ENCODE measurements at regions of chr4 and their contacts with region 1.

Region 1: DNA sequence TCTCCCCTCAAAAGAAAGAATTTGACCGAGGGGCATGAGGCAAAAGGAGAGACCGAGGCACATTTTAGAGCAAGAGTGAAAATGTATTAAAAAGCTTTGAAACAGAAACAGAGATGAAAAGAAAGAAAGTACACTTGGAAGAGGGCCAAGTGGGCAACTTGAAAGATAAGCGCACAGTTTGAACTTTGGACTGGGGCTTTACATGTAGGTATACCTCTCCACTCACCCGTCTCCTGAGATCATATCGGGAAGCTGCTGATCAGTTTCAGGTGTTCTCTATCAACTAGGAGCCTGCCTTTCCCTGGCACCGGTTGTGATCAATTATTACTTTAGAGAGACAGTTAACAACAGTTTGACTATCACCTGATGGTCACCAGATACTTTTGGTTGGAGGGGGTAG is 2666.5 kb downstream of the ARAP2 start:
- DNase-seq: no peak
- ATAC-seq: peak; percentile 43
- H3K4me3 ChIP-seq: no peak overlapping the region
- H3K27ac ChIP-seq: no peak overlapping the region
- H3K4me1 ChIP-seq: no peaks in the 10 kb centered on the region
- H3K27me3 ChIP-seq: no peaks in the 10 kb centered on the region
- CTCF ChIP-seq: no peak
- EP300 ChIP-seq: no peak
- POLR2A ChIP-seq: no peak
- RAD21 ChIP-seq: no peak

Region 2: DNA sequence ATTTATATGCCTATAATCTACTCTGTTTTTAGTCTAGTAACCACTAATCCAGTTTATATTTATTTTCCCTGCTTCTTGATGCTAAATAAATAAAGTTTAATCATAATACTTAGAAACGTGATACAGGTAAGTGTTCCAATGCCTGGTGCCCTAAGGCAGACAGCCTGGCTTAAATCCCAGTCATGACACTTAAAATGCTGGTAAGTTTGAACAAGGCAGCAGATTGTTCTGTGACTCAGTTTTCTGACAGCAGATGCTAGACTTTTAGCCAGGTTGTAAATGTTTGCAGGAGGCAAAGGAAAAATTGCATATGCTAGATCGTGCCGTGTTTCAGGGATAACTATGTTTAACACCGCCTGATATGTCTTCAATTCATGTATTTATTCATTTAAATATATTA is 196.0 kb before region 1 on chr4:
- CTCF ChIA-PET with region 1: no interaction called
- POLR2A ChIA-PET with region 1: no interaction called
- RAD21 ChIA-PET with region 1: no interaction called
- SMC1A ChIA-PET with region 1: no interaction called
- in situ Hi-C with region 1: no loop called
- intact Hi-C with region 1: no loop called
- DNase-seq: no peak
- ATAC-seq: no peak
- H3K4me3 ChIP-seq: no peak overlapping the region
- H3K27ac ChIP-seq: no peak overlapping the region
- H3K4me1 ChIP-seq: no peaks in the 10 kb centered on the region
- H3K27me3 ChIP-seq: no peaks in the 10 kb centered on the region
- CTCF ChIP-seq: no peak
- EP300 ChIP-seq: no peak
- POLR2A ChIP-seq: no peak
- RAD21 ChIP-seq: no peak

Region 3: GRCh38 chr4:33561259-33561658 is 16.5 kb before region 1 on chr4:
- CTCF ChIA-PET with region 1: interaction called, 3 read pairs
- POLR2A ChIA-PET with region 1: interaction called, 4 read pairs
- RAD21 ChIA-PET with region 1: no interaction called
- SMC1A ChIA-PET with region 1: interaction called, 10 read pairs
- in situ Hi-C with region 1: no loop called
- intact Hi-C with region 1: no loop called
- DNase-seq: no peak
- ATAC-seq: no peak
- H3K4me3 ChIP-seq: no peak overlapping the region
- H3K27ac ChIP-seq: no peak overlapping the region
- H3K4me1 ChIP-seq: no peaks in the 10 kb centered on the region
- H3K27me3 ChIP-seq: no peaks in the 10 kb centered on the region
- CTCF ChIP-seq: no peak
- EP300 ChIP-seq: no peak
- POLR2A ChIP-seq: no peak
- RAD21 ChIP-seq: no peak

Region 4: DNA sequence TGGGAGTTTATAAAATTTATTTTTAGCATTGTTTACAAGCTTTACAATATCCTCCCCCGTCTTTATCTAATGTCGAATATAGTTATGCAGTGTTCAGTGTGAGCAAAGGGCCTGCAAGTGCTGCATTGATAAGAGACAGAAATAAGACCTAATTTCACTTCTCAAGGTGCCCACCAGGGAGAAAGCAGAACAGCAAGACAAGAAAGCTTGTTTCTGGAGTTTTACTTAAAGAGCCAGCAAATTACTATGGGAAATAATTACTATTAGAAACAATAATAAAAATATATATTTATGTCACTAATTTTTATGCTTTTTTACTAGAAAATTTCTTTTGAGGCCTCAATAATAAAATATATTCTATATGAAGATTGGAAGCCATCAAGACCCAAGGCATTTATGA is 11.1 kb before region 1 on chr4:
- CTCF ChIA-PET with region 1: interaction called, 6 read pairs
- POLR2A ChIA-PET with region 1: interaction called, 7 read pairs
- RAD21 ChIA-PET with region 1: interaction called, 21 read pairs
- SMC1A ChIA-PET with region 1: interaction called, 18 read pairs
- in situ Hi-C with region 1: no loop called
- intact Hi-C with region 1: no loop called
- DNase-seq: no peak
- ATAC-seq: no peak
- H3K4me3 ChIP-seq: no peak overlapping the region
- H3K27ac ChIP-seq: no peak overlapping the region
- H3K4me1 ChIP-seq: no peaks in the 10 kb centered on the region
- H3K27me3 ChIP-seq: no peaks in the 10 kb centered on the region
- CTCF ChIP-seq: no peak
- EP300 ChIP-seq: no peak
- POLR2A ChIP-seq: no peak
- RAD21 ChIP-seq: no peak

Region 5: GRCh38 chr4:33606928-33607327 is 29.1 kb after region 1 on chr4:
- CTCF ChIA-PET with region 1: no interaction called
- POLR2A ChIA-PET with region 1: interaction called, 4 read pairs
- RAD21 ChIA-PET with region 1: interaction called, 17 read pairs
- SMC1A ChIA-PET with region 1: interaction called, 7 read pairs
- in situ Hi-C with region 1: no loop called
- intact Hi-C with region 1: no loop called
- DNase-seq: no peak
- ATAC-seq: no peak
- H3K4me3 ChIP-seq: no peak overlapping the region
- H3K27ac ChIP-seq: no peak overlapping the region
- H3K4me1 ChIP-seq: no peaks in the 10 kb centered on the region
- H3K27me3 ChIP-seq: no peaks in the 10 kb centered on the region
- CTCF ChIP-seq: no peak
- EP300 ChIP-seq: no peak
- POLR2A ChIP-seq: no peak
- RAD21 ChIP-seq: no peak

Region 6: GRCh38 chr4:33802578-33802977 is 224.8 kb after region 1 on chr4:
- CTCF ChIA-PET with region 1: no interaction called
- POLR2A ChIA-PET with region 1: no interaction called
- RAD21 ChIA-PET with region 1: no interaction called
- SMC1A ChIA-PET with region 1: no interaction called
- in situ Hi-C with region 1: no loop called
- intact Hi-C with region 1: no loop called
- DNase-seq: no peak
- ATAC-seq: peak; percentile 90
- H3K4me3 ChIP-seq: no peak overlapping the region
- H3K27ac ChIP-seq: no peak overlapping the region
- H3K4me1 ChIP-seq: no peaks in the 10 kb centered on the region
- H3K27me3 ChIP-seq: no peaks in the 10 kb centered on the region
- CTCF ChIP-seq: no peak; a peak in 1 of 6 replicates
- EP300 ChIP-seq: no peak
- POLR2A ChIP-seq: no peak
- RAD21 ChIP-seq: no peak

Measured in GM12878 (cell line).